ENCODE measurements at regions of chr9 and their contacts with region 1.

Region 1: GRCh38 chr9:72280913-72281500 is 84.0 kb downstream of the ZFAND5 start:
- DNase-seq: peak; percentile 63
- H3K4me3 ChIP-seq: no peak overlapping the region
- H3K27ac ChIP-seq: no peak overlapping the region
- H3K4me1 ChIP-seq: no peaks in the 10 kb centered on the region
- H3K27me3 ChIP-seq: no peaks in the 10 kb centered on the region
- CTCF ChIP-seq: peak; percentile 90

Region 2: GRCh38 chr9:72753266-72753893 is 472.4 kb after region 1 on chr9:
- intact Hi-C with region 1: loop called (anchors 5 kb)
- DNase-seq: no peak
- H3K4me3 ChIP-seq: no peak overlapping the region
- H3K27ac ChIP-seq: no peak overlapping the region
- H3K4me1 ChIP-seq: no peaks in the 10 kb centered on the region
- H3K27me3 ChIP-seq: no peaks in the 10 kb centered on the region
- CTCF ChIP-seq: no peak

Region 3: GRCh38 chr9:72827950-72828731 is 547.1 kb after region 1 on chr9:
- intact Hi-C with region 1: loop called (anchors 5 kb)
- DNase-seq: no peak
- H3K4me3 ChIP-seq: no peak overlapping the region
- H3K27ac ChIP-seq: no peak overlapping the region
- H3K4me1 ChIP-seq: no peaks in the 10 kb centered on the region
- H3K27me3 ChIP-seq: no peaks in the 10 kb centered on the region
- CTCF ChIP-seq: no peak

Region 4: DNA sequence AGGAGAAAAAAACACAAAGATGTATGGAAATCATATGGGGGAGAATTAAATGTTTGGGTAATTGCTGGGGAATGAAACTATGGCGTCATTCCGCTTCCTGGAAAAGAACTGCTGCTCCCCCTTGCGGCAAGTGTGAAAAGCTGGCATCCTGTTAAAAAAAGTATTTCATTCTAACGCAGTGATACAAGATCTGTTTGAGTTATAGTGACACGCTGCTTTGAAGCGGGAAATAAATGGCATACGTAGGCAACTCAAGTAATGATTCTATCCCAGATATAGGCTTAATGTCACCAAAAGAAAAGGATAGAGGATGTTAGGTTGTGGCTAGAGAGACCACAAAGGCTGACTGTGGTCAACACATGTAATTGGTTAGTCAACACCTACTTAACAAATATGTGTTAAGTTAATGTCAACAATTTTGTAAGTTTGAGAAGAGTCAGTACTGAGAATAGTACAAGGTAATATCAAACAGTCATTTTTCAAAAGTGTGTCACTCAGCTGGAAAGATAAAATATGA is 742.1 kb after region 1 on chr9:
- intact Hi-C with region 1: loop called (anchors 5 kb)
- DNase-seq: peak; percentile 64
- H3K4me3 ChIP-seq: no peak overlapping the region
- H3K27ac ChIP-seq: no peak overlapping the region
- H3K4me1 ChIP-seq: no peaks in the 10 kb centered on the region
- H3K27me3 ChIP-seq: no peaks in the 10 kb centered on the region
- CTCF ChIP-seq: peak; percentile 74